ENCODE measurements at regions of chr2 and their contacts with region 1.

Region 1: DNA sequence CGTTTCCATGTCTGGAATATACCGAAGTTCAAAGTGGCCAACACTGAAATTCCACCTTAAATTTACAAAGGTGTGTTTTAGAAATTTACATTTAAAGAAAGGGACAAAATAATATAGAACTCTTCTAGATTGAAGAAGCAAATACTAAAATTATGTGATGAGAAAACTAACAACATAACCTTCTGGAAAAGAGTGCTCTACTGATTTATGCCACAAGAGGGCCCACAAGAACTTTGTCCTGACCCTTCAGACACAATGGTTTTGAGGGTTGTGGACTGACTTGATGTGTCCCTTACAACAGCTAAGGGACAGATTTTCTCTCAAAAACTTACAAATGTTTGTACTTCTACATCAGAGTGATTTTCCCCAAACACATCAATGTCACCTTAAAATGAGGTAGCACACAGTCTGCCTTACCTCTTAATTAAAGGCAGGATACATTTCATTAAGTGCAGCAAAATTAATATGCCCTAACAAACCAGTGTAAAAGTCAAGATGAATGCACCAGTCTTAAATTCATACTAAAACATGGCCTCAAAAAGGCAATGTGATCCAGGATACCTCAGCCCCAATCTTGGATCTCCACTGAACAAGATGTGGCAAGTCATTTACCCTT is 36.2 kb downstream of the EIF2AK3 start:
- DNase-seq: peak in 1 of 2 donors; percentile 85
- H3K4me3 ChIP-seq: no peak overlapping the region
- H3K27ac ChIP-seq: peak overlapping the region in 3 of 5 donors; percentile 18 to 49 (median 40)
- H3K4me1 ChIP-seq: peaks cover 0 to 16% (median 4%) of the 10 kb centered on the region in 4 donors
- H3K27me3 ChIP-seq: no peaks in the 10 kb centered on the region
- CTCF ChIP-seq: peak in 5 of 7 experiments; percentile 71 to 86 (median 77)
- EP300 ChIP-seq: no peak
- POLR2A ChIP-seq: no peak

Region 2: DNA sequence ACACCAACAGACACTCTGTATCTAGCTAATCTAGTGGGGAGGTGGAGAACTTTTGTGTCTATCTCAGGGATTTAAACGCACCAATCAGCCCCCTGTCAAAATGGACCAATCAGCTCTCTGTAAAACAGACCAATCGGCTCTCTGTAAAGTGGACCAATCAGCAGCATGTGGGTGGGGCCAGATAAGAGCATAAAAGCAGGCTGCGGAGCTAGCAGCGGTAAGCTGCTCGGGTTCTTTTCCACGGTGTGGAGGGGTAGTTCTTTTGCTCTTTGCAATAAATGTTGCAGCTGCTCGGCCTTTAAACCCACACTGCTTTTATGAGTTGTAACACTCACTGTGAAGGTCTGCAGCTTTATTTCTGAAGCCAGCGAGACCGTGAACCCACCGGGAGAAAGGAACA is 87.3 kb before region 1 on chr2:
- intact Hi-C with region 1: no loop called
- DNase-seq: no peak
- H3K4me3 ChIP-seq: no peak overlapping the region
- H3K27ac ChIP-seq: no peak overlapping the region
- H3K4me1 ChIP-seq: no peaks in the 10 kb centered on the region
- H3K27me3 ChIP-seq: no peaks in the 10 kb centered on the region
- CTCF ChIP-seq: no peak
- EP300 ChIP-seq: no peak
- POLR2A ChIP-seq: no peak

Region 3: GRCh38 chr2:88669371-88670214 is 78.5 kb after region 1 on chr2:
- intact Hi-C with region 1: loop called (anchors 5 kb)
- DNase-seq: peak; percentile 33 to 75
- H3K4me3 ChIP-seq: no peak overlapping the region
- H3K27ac ChIP-seq: no peak overlapping the region
- H3K4me1 ChIP-seq: peaks cover 0 to 5% (median 5%) of the 10 kb centered on the region in 4 donors
- H3K27me3 ChIP-seq: no peaks in the 10 kb centered on the region
- CTCF ChIP-seq: peak in 5 of 7 experiments; percentile 44 to 71 (median 56)
- EP300 ChIP-seq: no peak
- POLR2A ChIP-seq: no peak

Region 4: DNA sequence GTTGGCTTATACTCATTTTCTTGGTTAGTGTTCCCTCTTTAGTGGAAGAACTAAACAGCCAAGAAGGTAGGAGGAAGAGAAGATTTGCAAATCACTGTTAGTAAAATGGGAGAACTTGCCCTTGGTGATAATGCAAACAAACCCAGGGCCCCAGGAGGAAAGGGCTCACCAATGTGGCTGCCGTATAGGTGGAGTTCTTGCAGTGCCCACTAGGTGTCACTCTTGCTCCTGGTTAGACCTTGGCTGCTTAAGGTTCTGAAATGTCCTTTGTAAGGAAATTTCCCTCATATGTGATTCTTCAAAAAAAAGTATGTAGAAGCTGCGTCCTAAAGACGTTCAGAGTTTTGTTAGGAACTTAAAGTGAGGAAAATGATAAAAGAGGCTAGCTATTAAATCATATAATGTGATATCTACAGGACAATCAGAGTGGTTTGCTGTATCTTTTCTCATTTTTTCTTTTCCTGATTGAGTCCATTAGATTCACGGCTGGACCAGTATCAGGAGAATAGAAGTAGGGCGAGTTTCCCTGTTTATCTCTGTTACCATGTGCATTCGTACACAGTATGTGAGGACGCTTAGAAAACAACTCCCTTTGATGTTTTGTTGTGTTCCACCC is 149.0 kb after region 1 on chr2:
- intact Hi-C with region 1: no loop called
- DNase-seq: peak; percentile 84 to 90
- H3K4me3 ChIP-seq: no peak overlapping the region
- H3K27ac ChIP-seq: peak overlapping the region in 4 of 5 donors; percentile 3 to 46 (median 18)
- H3K4me1 ChIP-seq: peaks cover 19 to 36% (median 23%) of the 10 kb centered on the region in 4 donors
- H3K27me3 ChIP-seq: no peaks in the 10 kb centered on the region
- CTCF ChIP-seq: peak in 5 of 7 experiments; percentile 80 to 94 (median 92)
- EP300 ChIP-seq: no peak
- POLR2A ChIP-seq: no peak

Measured in stomach (tissue), 19 donors.